ENCODE measurements at regions of chr6 and their contacts with region 1.

Region 1: GRCh38 chr6:77740380-77740779 is 87.5 kb downstream of the MEI4 start:
- DNase-seq: peak; percentile 43
- H3K4me3 Mint-ChIP-seq: no peak overlapping the region
- H3K27ac Mint-ChIP-seq: no peak overlapping the region
- H3K4me1 Mint-ChIP-seq: no peaks in the 10 kb centered on the region
- H3K27me3 Mint-ChIP-seq: no peaks in the 10 kb centered on the region
- CTCF ChIP-seq: peak; percentile 41

Region 2: GRCh38 chr6:77633993-77634715 is 106.2 kb before region 1 on chr6:
- CTCF ChIA-PET with region 1: no interaction called
- POLR2A ChIA-PET with region 1: no interaction called
- intact Hi-C with region 1: no loop called
- DNase-seq: peak; percentile 9
- H3K4me3 Mint-ChIP-seq: no peak overlapping the region
- H3K27ac Mint-ChIP-seq: no peak overlapping the region
- H3K4me1 Mint-ChIP-seq: peaks cover 5% of the 10 kb centered on the region
- H3K27me3 Mint-ChIP-seq: no peaks in the 10 kb centered on the region
- CTCF ChIP-seq: no peak

Region 3: DNA sequence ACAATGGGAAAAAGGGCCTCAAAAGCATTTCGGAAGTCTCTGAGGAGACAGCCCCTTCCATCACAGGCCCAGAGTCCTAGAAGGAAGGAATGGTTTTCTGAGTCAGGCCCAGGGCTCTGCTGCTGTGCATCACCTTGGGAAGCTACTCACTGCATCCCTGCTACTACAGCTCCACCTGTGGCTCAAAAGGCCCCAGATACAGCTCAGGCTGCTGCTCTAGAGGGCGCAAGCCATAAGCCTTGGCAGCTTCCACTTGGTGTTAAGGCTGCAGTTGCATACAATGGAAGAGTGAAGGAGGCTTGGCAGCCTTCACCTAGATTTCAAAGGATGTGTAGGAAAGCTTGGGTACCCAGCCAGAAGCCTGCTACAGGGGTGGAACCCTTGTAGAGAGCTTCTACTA is 32.8 kb before region 1 on chr6:
- CTCF ChIA-PET with region 1: no interaction called
- POLR2A ChIA-PET with region 1: no interaction called
- intact Hi-C with region 1: no loop called
- DNase-seq: no peak
- H3K4me3 Mint-ChIP-seq: no peak overlapping the region
- H3K27ac Mint-ChIP-seq: no peak overlapping the region
- H3K4me1 Mint-ChIP-seq: no peaks in the 10 kb centered on the region
- H3K27me3 Mint-ChIP-seq: no peaks in the 10 kb centered on the region
- CTCF ChIP-seq: no peak

Region 4: GRCh38 chr6:77926198-77926752 is 185.9 kb after region 1 on chr6:
- CTCF ChIA-PET with region 1: no interaction called
- POLR2A ChIA-PET with region 1: no interaction called
- intact Hi-C with region 1: loop called (anchors 1 kb)
- DNase-seq: peak; percentile 42
- H3K4me3 Mint-ChIP-seq: no peak overlapping the region
- H3K27ac Mint-ChIP-seq: no peak overlapping the region
- H3K4me1 Mint-ChIP-seq: no peaks in the 10 kb centered on the region
- H3K27me3 Mint-ChIP-seq: no peaks in the 10 kb centered on the region
- CTCF ChIP-seq: peak; percentile 20

Region 5: DNA sequence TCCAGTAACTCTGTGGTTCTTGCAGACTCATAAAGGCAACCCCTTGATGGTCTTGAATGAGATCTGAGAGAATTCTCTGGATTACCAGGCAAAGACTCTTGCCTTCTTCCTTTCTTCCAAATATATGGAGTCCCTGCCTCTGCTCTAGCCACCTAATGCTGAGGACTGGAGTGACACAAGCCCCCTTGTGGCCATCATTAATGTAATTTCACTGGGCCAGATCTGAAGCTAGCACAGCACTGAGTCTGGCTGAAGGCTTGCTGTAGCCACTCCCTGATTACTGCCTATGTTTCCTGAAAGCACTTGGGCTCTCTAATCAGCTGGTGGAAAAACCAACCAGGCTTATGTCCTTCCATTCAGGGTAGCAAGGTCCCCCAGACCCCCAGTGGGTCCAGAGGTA is 567.6 kb after region 1 on chr6:
- CTCF ChIA-PET with region 1: no interaction called
- POLR2A ChIA-PET with region 1: no interaction called
- intact Hi-C with region 1: loop called (anchors 10 kb)
- DNase-seq: peak; percentile 45
- H3K4me3 Mint-ChIP-seq: no peak overlapping the region
- H3K27ac Mint-ChIP-seq: no peak overlapping the region
- H3K4me1 Mint-ChIP-seq: no peaks in the 10 kb centered on the region
- H3K27me3 Mint-ChIP-seq: no peaks in the 10 kb centered on the region
- CTCF ChIP-seq: peak; percentile 13

Region 6: DNA sequence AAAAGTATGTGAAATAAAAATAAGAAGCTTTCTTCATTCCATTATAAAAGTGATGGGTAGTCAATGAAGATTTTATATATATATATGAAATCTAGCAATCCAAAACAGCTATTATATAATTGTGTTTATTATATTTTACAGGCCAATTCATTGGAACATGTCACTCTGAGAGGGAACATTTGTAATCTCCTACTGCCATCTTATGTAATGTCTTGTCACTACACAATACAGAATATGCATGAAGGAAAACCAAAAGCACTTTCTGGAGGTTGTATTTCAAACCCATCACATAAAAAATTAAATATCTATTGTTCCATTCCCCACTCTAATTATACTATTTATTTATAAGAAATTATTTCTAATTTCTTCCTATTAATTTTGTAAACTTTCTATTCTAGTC is 1095.4 kb after region 1 on chr6:
- CTCF ChIA-PET with region 1: interaction called, 3 read pairs
- POLR2A ChIA-PET with region 1: no interaction called
- intact Hi-C with region 1: loop called (anchors 1 kb)
- DNase-seq: peak; percentile 31
- H3K4me3 Mint-ChIP-seq: no peak overlapping the region
- H3K27ac Mint-ChIP-seq: no peak overlapping the region
- H3K4me1 Mint-ChIP-seq: no peaks in the 10 kb centered on the region
- H3K27me3 Mint-ChIP-seq: no peaks in the 10 kb centered on the region
- CTCF ChIP-seq: peak; percentile 33